Right lobe of liver (tissue), 6 donors: ENCODE measurements at regions of chr17 and their contacts with region 1.

Region 1: GRCh38 chr17:57833179-57833939 is 16.5 kb downstream of the MRPS23 start:
- DNase-seq: peak in 2 of 3 donors; percentile 55 to 69
- ATAC-seq: peak; percentile 88 to 93 (median 90)
- H3K4me3 ChIP-seq: peak overlapping the region; percentile 10 to 47 (median 44)
- H3K27ac ChIP-seq: peak overlapping the region in 1 of 3 donors; percentile 35
- H3K4me1 ChIP-seq: peaks cover 0 to 13% (median 0%) of the 10 kb centered on the region in 4 donors
- H3K27me3 ChIP-seq: no peaks in the 10 kb centered on the region
- CTCF ChIP-seq: peak; percentile 78 to 92 (median 89)
- POLR2A ChIP-seq: no peak

Region 2: GRCh38 chr17:57130761-57131461 is 702.4 kb before region 1 on chr17:
- intact Hi-C with region 1: loop called (anchors 5 to 10 kb)
- DNase-seq: peak; percentile 75 to 79 (median 78)
- ATAC-seq: peak; percentile 89 to 98 (median 95)
- H3K4me3 ChIP-seq: no peak overlapping the region
- H3K27ac ChIP-seq: no peak overlapping the region
- H3K4me1 ChIP-seq: peaks cover 0 to 6% (median 0%) of the 10 kb centered on the region in 4 donors
- H3K27me3 ChIP-seq: no peaks in the 10 kb centered on the region
- CTCF ChIP-seq: peak; percentile 60 to 89 (median 87)
- POLR2A ChIP-seq: no peak

Region 3: DNA sequence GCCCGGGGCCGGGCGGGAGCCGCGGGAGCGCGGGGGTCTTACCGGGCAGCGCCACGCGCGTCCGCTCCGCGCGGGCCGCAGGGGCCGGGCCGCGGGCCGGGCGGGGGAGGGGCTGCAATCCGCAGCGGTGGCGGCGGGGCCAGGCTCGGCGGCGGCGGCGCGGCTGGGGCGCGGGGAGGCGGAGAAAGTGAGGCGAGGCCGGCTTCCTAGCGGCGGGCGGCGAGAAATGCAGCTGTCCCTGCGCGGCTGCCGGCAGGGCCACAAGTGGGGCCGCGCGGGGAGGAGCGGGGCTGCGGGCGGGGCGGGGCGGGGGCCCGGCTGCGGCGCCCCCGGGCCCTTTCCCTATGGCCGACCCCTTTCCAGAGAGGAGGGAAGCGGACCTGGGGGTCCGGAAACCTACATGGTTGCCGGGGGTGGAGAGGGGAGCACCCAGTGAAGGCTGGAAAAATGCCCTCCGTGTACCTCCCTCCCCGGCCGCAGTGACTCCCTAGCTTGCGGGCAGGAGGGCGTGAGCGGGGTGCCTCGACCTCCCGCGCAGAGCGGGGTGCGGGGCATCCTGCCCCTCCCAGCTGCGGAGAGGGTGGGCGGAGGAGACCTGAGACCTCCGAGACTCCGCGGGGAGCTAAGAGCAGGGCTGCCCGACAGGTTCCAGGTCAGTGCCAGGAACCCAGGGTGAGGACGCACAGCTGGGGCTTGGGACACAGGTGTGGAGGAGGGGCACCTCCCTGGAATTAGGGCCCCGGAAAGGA is 122.0 kb after region 1 on chr17 and contains the start of gene CUEDC1:
- intact Hi-C with region 1: no loop called
- DNase-seq: peak; percentile 84 to 86 (median 84)
- ATAC-seq: peak; percentile 77 to 86 (median 83)
- H3K4me3 ChIP-seq: peak within 1 kb of the TSS; percentile 59 to 67 (median 66)
- H3K27ac ChIP-seq: peak within 1 kb of the TSS; percentile 69 to 88 (median 84)
- H3K4me1 ChIP-seq: peaks cover 0 to 27% (median 3%) of the 10 kb centered on the region in 4 donors
- H3K27me3 ChIP-seq: no peaks in the 10 kb centered on the region
- CTCF ChIP-seq: peak; percentile 14 to 51 (median 39)
- POLR2A ChIP-seq: no peak
- total RNA-seq, gene CUEDC1: 4.0 to 8.5 (median 5.5) TPM